Activated T-helper 2 cell treated with anti-CD3 and anti-CD28 coated beads, Interferon-gamma antibody, Interleukin-2, Interleukin-4, amounts not matched to agents 10 μg/mL and 5 μg/mL and 100 μg/mL, durations not matched to agents 14 hours and 24 hours and 36 hours (primary cell): ENCODE measurements at regions of chr14 and their contacts with region 1.

Region 1: DNA sequence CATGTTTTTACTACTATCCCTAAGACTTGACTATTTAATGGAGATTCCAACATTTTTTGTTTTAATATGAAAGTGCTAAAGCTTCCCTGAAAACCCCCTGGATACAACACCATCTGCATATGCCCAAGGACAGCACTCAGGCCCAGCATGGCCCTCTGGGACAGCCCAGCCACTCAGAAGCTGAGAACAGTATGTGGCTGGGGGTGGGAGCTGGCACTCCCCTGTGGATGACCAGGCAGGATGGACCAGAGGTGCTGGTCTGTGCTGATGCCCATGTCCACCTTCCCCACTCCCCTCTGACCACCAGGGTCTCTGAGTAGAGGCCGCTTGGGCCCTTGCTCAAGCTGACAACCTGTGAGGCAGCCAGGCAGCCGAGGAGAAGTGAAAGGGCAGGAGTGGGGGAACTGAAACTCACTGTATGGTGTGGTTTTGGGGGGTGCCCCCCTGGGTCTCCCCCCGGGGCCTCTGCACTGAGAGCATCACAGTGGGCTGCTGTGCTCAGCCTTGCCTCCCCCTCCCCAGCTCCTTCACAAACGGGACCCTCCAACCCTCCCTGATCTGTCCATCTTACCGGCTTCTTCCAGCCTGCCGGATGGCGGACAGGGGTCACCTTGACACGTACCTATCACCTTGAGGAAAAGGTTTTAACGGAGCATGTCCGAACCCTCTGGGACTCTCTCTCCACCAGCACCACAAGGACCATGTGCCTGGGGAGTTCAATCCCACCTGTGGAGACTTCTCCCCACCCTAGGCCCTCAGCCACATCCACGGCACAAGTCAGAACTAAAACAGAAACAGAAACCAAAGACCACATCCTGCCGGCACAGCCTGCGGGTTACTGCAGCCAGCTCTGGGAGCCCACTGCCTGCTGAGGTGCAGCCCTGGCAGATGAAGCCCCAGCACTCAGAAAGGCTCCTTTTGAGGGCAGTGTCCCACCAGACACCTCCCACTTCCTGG is at the start of gene TMEM229B:
- DNase-seq: peak; percentile 80
- H3K4me3 Mint-ChIP-seq: peak within 1 kb of the TSS; percentile 72
- H3K27ac Mint-ChIP-seq: peak within 1 kb of the TSS; percentile 82
- H3K4me1 Mint-ChIP-seq: peaks cover 30% of the 10 kb centered on the region
- H3K27me3 Mint-ChIP-seq: peaks cover 20% of the 10 kb centered on the region
- total RNA-seq, gene TMEM229B: 0.71 and 0.75 TPM in 2 replicates

Region 2: DNA sequence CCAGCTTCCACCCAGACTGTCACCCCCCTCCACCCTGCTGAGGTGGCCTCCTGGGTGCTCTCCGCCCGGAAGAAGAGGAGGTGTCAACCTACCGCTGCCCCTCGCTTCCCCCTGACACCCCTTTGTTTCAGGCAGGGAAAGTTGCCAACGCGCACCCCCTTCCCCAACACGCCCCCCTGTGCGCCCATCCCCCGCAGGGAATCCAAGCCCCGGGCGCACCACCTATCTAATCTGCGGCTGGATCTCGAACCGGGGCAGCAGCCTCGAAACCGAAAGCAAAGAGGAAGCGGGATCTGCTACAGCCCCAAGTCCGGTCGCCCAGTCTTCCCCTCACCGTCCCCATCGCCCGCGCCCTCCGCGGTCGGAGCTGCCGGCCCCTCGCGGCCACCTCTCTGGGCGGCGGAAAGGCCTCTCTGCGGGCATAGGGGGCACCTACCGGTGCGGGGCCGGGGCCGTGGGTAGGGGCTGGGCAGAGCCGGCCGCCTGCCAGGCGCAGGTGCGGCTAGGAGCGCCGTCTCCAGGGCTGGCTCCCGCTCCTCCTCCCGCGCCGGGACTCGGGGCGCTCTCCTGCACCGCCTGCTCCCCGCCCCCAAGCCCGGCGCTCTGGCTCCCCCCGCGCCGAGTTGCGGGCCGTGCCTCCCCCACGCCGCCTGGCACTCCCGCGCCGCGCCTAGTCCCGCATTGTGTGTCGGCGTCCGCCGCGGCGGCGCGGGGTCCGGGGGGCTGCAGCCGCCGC is 26.6 kb after region 1 on chr14:
- intact Hi-C with region 1: loop called (anchors 1 kb)
- DNase-seq: peak; percentile 47
- H3K4me3 Mint-ChIP-seq: peak overlapping the region; percentile 81
- H3K27ac Mint-ChIP-seq: no peak overlapping the region
- H3K4me1 Mint-ChIP-seq: peaks cover 2% of the 10 kb centered on the region
- H3K27me3 Mint-ChIP-seq: peaks cover 76% of the 10 kb centered on the region

Region 3: DNA sequence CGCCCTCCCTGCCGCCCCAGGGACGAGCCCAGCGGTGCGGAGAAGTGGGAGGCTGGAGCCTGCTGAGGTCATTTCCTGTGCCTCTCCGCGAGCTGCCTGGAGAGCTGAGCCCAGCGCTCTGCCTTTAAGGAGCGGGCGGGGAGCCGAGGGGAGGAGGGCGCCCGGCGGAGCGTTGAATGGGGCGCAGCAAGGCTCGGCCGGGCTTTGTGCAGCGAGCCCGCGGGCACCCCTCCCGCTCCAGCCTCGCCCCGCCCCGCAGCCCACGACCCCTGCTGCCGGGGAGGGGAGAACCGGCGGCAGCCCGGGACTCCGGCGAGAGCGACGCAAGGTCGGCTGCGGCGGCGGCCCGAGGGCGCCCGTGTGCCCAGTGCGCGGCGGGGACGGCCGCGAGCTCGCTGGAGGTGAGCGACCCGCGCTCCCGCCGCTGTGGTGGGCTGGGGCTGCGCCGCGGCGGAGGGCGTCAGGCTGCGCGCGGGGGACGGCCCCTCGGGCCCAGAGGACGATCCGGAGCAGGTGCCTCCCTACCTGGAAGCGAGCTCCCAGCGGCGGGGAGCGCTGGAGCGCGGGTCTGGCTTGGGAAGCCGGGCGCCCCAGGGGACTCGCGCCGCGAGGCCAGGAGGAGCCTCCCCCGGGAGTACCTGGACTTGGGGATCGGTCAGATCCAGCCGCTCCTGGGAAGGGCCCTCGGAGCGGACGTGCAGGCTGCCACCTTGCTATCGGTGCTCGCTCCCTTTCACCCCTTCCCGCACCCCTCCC is 45.0 kb after region 1 on chr14 and contains the start of gene PLEKHH1:
- intact Hi-C with region 1: loop called (anchors 5 kb)
- DNase-seq: peak; percentile 51
- H3K4me3 Mint-ChIP-seq: peak within 1 kb of the TSS; percentile 69
- H3K27ac Mint-ChIP-seq: no peak within 1 kb of the TSS
- H3K4me1 Mint-ChIP-seq: peaks cover 5% of the 10 kb centered on the region
- H3K27me3 Mint-ChIP-seq: peaks cover 68% of the 10 kb centered on the region
- total RNA-seq, gene PLEKHH1: 1.5 and 1.8 TPM in 2 replicates